SK-N-SH (cell line): ENCODE measurements at regions of chr16 and their contacts with region 1.

Region 1: DNA sequence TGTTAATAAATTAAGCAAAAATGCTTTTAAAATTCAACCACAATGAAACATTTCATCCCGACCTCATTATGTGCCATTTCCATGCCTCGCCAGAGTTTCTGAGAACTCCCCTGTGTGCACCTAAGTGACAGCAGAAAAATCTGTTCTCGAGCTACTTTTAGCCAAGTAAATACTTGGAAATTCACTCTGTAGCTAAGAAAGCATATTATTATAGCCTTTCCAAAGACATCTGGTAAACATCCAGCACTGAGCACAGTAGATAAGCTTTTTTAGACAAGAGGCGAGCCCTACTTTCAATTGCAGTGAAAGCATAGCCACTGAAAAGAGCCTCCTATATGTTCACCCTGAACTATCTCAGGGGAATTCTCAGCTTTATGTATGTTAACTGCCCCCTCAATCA is 242.8 kb upstream of the PSMD7 start:
- DNase-seq: no peak
- H3K4me3 ChIP-seq: no peak overlapping the region
- H3K27ac ChIP-seq: no peak overlapping the region
- H3K4me1 ChIP-seq: no peaks in the 10 kb centered on the region
- H3K27me3 ChIP-seq: no peaks in the 10 kb centered on the region
- CTCF ChIP-seq: no peak
- EP300 ChIP-seq: no peak
- RAD21 ChIP-seq: no peak

Region 2: GRCh38 chr16:73921295-73921694 is 132.5 kb before region 1 on chr16:
- CTCF ChIA-PET with region 1: no interaction called
- POLR2A ChIA-PET with region 1: no interaction called
- DNase-seq: no peak
- H3K4me3 ChIP-seq: no peak overlapping the region
- H3K27ac ChIP-seq: no peak overlapping the region
- H3K4me1 ChIP-seq: no peaks in the 10 kb centered on the region
- H3K27me3 ChIP-seq: no peaks in the 10 kb centered on the region
- CTCF ChIP-seq: no peak
- EP300 ChIP-seq: no peak
- RAD21 ChIP-seq: no peak

Region 3: GRCh38 chr16:74064120-74064735 is 10.4 kb after region 1 on chr16:
- CTCF ChIA-PET with region 1: interaction called, 13 read pairs
- POLR2A ChIA-PET with region 1: no interaction called
- DNase-seq: peak; percentile 55
- H3K4me3 ChIP-seq: no peak overlapping the region
- H3K27ac ChIP-seq: no peak overlapping the region
- H3K4me1 ChIP-seq: no peaks in the 10 kb centered on the region; a peak in 1 of 4 replicates
- H3K27me3 ChIP-seq: no peaks in the 10 kb centered on the region
- CTCF ChIP-seq: no peak; the same call in 1 of the 2 replicates
- EP300 ChIP-seq: no peak
- RAD21 ChIP-seq: peak; percentile 80

Region 4: GRCh38 chr16:74094514-74094913 is 40.7 kb after region 1 on chr16:
- CTCF ChIA-PET with region 1: no interaction called
- POLR2A ChIA-PET with region 1: no interaction called
- DNase-seq: no peak
- H3K4me3 ChIP-seq: no peak overlapping the region
- H3K27ac ChIP-seq: no peak overlapping the region
- H3K4me1 ChIP-seq: no peaks in the 10 kb centered on the region; a peak in 1 of 4 replicates
- H3K27me3 ChIP-seq: no peaks in the 10 kb centered on the region
- CTCF ChIP-seq: no peak
- EP300 ChIP-seq: no peak
- RAD21 ChIP-seq: no peak

Region 5: DNA sequence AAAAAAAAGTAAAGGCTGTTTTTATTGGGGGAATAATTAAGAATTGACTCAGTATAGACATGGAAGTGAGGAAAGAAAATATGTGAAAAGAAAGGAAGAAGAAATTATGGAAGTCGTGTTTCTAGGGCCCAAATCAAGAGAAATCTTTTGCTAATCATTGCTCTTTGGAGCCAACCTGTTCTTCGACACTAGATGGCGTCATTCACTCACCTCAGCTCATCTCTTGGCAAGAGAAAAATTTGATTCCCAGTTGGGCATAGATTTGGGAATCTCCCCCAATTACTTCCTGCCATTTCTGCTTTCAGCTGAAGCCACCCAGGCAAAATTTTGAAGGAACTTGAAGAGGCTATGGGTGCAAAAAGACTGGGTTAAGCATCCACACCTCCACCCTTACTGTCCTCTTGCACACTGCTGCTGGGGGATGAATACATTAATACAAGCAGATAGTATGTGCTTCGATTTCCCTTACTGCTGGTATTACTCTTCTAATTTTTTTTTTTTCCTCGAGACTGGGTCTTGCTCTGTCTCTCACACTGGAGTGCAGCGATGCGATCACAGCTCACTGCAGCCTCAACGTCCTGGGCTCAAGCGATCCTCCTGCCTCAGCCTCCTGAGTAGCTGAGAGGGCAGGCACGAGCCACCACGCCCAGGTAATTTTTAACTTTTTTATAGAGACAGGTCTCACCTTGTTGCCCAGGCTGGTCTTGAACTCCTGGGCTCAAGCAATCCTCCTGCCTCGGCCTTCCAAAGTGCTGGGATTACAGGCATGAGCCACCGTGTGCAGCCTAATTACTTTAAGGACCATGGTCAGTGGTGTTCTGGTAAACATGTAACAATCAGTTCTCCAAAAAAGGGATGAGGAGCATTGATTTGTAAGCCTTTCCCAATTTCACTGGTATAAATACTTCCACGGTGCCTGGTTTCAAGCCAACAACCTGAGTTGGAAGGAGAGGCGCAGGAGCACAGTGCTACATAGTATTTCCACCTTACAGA is 256.3 kb after region 1 on chr16:
- CTCF ChIA-PET with region 1: no interaction called
- POLR2A ChIA-PET with region 1: no interaction called
- DNase-seq: peak; percentile 66
- H3K4me3 ChIP-seq: no peak overlapping the region; a peak in 1 of 4 replicates
- H3K27ac ChIP-seq: no peak overlapping the region
- H3K4me1 ChIP-seq: no peaks in the 10 kb centered on the region
- H3K27me3 ChIP-seq: no peaks in the 10 kb centered on the region
- CTCF ChIP-seq: peak; percentile 84
- EP300 ChIP-seq: no peak
- RAD21 ChIP-seq: peak; percentile 92